Posterior vena cava (tissue), 2 donors: ENCODE measurements at regions of chr12 and their contacts with region 1.

Region 1: DNA sequence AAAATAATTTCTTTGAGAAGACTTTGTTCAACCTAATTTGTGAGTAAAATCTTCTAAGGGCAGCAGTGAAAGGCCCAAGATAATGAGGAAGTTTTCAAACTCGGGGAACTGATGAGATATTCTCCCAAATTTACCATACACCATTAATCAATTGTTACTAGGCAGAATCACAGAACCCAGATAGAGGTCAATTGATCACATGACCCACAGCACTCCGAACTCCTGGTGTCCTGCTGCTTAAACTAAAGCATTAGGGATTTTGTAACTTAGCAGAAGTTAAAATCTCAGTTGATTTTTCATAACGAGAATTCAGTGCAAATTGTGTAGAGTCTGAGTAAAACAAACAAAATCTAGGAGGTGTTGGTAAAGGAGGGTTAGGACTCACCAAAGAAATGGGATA is 207.8 kb downstream of the C12orf42 start:
- DNase-seq: no peak

Region 2: DNA sequence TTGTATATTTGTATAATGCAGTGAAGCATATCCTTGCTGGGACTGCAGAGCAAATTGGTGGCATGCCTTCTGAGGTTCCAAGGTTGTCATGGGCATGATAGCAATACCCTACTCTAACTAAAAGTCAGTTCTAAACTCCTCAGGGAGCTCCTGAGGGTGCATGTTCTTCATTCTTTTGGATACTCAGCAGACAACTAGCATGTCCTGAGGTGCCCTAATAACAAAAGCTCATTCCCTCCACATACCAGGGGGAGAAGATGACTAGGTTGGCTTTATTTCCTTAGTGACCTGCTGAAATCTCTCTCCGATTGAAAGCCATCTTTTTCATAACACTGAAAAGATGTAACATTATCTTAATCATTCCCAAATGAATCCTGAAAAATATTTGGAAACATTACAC is 619.0 kb before region 1 on chr12:
- intact Hi-C with region 1: loop called in 1 of 2 experiments (anchors 5 kb)
- DNase-seq: no peak